Activated T-helper 2 cell treated with anti-CD3 and anti-CD28 coated beads, Interferon-gamma antibody, Interleukin-2, Interleukin-4, amounts not matched to agents 10 μg/mL and 5 μg/mL and 100 μg/mL, durations not matched to agents 14 hours and 24 hours and 36 hours (primary cell): ENCODE measurements at regions of chr19 and their contacts with region 1.

Region 1: DNA sequence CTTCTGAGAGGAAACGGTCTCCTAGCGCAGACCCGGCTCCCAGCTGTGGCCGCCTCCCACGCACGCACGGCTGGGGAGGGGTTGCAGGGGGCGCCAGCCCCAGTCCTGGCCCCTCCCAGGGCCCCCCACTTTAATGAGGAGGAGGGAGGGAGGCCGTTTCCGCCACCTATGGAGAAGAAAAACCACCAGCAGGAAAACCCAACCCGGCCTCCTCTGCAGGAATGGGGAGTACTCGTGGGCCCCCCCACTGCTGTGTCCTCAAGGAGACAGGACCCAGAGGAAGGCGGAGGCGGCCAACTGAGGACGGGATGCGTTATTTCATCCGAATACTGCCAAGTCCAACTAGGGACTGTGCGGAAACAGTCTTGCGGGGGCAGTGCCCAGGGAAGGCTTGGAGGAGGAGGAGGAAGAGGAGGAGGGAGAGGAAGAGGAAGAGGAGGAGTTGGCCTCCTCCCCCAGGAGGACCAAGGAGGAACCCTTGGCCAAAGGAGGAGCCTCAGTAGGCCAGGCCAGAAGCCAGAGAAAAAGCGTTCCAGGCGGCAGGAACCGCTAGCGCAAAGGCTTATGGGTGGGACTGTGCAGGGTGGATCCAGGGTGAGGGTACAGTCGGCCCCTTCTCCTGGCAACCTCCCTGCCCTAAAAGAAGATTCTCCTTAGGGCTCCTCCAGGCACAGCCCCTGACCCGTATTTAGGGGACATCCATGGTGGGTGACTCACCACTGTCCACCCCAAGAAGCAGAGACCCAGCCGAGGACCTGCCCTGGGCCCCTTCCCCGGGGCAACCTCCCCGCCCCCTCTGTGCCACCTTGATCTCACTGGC is 3.8 kb upstream of the SSBP4 start:
- DNase-seq: no peak
- H3K4me3 Mint-ChIP-seq: peak overlapping the region; percentile 52
- H3K27ac Mint-ChIP-seq: peak overlapping the region; percentile 88
- H3K4me1 Mint-ChIP-seq: peaks cover 43% of the 10 kb centered on the region
- H3K27me3 Mint-ChIP-seq: peaks cover 6% of the 10 kb centered on the region

Region 2: DNA sequence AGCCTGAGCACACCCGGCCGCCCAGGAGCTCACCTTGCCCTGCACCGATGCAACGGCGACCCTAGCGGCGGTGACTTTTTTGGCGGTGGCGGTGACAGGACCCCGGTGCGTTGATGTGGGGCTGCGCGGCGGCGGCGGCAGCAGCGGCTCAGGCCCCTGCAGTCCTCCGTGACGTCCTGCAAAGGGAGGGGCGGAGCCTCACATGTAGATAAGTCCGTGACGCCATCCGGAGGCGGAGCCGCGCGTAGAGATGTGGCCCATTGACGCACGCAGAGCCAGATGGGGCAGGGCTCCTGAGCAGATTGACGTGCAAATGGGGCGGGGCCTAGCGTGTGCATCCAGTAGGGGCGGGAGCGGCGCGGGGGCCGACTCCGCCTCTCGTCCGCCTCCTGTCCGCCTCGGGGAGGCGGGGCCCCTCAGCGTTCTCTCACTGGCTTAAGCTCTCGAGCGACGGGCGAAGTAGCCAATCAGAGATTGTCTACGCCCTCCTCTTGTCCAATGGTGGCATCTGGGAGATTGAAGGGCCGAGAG is 211.5 kb before region 1 on chr19 and contains the start of gene RAB3A:
- intact Hi-C with region 1: loop called (anchors 2 kb)
- DNase-seq: peak; percentile 99
- H3K4me3 Mint-ChIP-seq: peak within 1 kb of the TSS; percentile 94
- H3K27ac Mint-ChIP-seq: peak within 1 kb of the TSS; percentile 95
- H3K4me1 Mint-ChIP-seq: peaks cover 11% of the 10 kb centered on the region
- H3K27me3 Mint-ChIP-seq: peaks cover 2% of the 10 kb centered on the region
- total RNA-seq, gene RAB3A: 6.3 and 7.4 TPM in 2 replicates

Region 3: GRCh38 chr19:18349524-18350128 is 65.8 kb before region 1 on chr19:
- intact Hi-C with region 1: loop called (anchors 5 kb)
- DNase-seq: no peak
- H3K4me3 Mint-ChIP-seq: no peak overlapping the region
- H3K27ac Mint-ChIP-seq: no peak overlapping the region
- H3K4me1 Mint-ChIP-seq: no peaks in the 10 kb centered on the region
- H3K27me3 Mint-ChIP-seq: no peaks in the 10 kb centered on the region

Region 4: GRCh38 chr19:18428787-18429674 is 13.6 kb after region 1 on chr19:
- intact Hi-C with region 1: no loop called
- DNase-seq: peak; percentile 82
- H3K4me3 Mint-ChIP-seq: peak overlapping the region; percentile 17
- H3K27ac Mint-ChIP-seq: no peak overlapping the region
- H3K4me1 Mint-ChIP-seq: peaks cover 16% of the 10 kb centered on the region
- H3K27me3 Mint-ChIP-seq: no peaks in the 10 kb centered on the region

Region 5: DNA sequence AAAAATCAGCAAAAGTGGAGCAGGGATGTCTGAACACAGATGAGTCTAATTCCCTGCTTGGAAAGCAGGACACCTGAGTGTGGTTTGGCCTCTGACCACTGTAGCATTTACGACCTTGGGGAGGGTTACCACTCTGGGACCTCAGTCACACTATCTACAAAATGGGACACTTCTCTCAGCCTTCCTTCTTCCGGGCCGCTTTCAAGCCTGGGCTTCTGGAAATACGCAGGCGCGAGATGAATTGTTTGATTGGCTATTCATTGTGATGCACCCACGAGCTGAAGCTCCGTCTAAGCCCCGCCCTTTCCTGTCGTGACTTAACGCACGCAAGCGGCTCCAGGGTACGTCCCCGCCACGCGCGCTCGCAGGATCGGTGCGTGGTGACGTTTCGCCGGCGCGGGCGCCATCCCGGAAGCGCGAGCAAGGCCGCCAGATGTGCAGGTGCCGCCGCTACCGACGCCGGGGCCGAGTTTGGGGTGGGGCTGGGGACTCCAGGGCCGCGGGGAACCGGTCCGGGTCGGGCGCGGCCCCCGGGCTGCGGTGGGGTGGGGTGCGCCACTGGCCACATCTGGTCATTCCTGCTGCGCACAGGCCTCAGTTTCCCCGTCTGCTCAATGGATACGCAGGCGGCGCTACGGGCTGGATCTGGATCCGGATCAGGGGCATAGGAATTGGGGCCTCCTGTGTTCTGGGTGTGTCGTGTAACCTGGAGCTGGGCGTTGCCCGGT is 142.2 kb after region 1 on chr19 and contains the start of gene KXD1:
- intact Hi-C with region 1: no loop called
- DNase-seq: peak; percentile 99
- H3K4me3 Mint-ChIP-seq: peak within 1 kb of the TSS; percentile 93
- H3K27ac Mint-ChIP-seq: peak within 1 kb of the TSS; percentile 96
- H3K4me1 Mint-ChIP-seq: peaks cover 16% of the 10 kb centered on the region
- H3K27me3 Mint-ChIP-seq: no peaks in the 10 kb centered on the region
- total RNA-seq, gene KXD1: 132 and 141 TPM in 2 replicates